CD14-positive monocyte (primary cell): ENCODE measurements at regions of chr10 and their contacts with region 1.

Region 1: DNA sequence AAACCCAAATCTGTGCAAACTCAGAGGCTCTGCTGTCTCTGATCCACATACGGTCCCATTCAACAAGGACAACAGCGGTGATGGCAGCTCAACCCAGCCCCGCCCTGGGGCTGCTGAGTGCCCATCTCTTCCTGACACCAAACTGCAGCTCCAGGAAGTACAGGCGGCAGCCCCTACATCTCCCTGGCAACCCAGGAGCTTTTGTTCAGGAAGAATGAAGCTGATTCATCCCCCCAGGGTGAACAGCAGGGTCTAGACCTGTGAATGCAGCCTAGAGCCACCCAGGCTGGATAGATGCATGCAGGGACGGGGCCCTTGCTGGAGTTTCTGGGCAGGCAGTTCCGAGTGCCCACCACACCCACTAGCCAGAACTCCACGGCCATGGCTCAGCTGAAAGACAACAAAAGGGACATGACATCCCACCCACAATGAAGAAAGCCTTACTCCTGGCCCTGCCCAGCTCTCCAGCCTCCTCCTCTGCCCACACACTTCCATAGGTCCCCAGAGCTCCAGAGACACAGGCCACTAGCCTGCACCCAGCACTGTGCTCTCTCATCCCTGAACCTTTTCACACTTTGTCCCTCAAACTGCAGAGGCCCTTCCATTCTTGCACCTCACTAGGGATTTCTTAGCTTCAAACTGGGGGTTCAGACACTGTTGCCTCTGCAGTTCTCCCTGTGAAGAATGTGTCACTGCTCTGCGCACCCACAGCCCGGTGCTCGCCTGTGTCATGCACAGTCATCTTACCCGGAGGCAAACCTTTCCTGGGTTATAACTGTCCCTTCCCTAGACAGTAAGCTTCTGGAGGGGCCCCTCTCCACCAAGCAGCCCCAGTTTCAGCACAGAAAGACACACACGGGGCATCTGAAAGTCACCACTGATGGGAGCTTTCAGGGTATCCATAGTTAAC is 99.1 kb downstream of the GRID1 start:
- DNase-seq: no peak
- H3K4me3 ChIP-seq: no peak overlapping the region
- H3K4me3 Mint-ChIP-seq: no peak overlapping the region
- H3K27ac ChIP-seq: no peak overlapping the region
- H3K27ac Mint-ChIP-seq: no peak overlapping the region
- H3K4me1 ChIP-seq: no peaks in the 10 kb centered on the region
- H3K4me1 Mint-ChIP-seq: peaks cover 2% of the 10 kb centered on the region
- H3K27me3 ChIP-seq: peaks cover 0 to 23% of the 10 kb centered on the region in 2 donors
- H3K27me3 Mint-ChIP-seq: peaks cover 27 to 30% (median 27%) of the 10 kb centered on the region in 3 donors
- CTCF ChIP-seq: no peak

Region 2: DNA sequence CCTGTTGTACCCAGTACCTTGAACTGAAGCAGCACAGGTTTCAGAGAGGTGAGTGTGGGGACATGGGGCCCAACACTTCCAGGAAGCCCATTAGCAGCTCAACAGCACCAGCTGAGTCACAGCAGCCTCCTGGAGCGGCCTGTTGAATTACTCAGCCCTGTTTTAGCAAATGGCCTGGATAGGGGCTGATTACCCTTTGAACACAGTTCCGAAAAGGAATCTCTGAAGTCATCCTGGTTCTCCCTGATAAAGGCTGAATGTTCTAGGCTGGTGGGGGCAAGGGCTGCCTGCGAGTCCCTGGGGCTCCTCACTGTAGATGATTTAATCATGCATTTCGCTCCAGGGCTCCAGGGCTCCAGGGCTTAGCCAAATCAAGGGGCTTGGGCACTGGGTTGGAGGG is 188.5 kb before region 1 on chr10:
- intact Hi-C with region 1: no loop called
- DNase-seq: no peak
- H3K4me3 ChIP-seq: no peak overlapping the region
- H3K4me3 Mint-ChIP-seq: no peak overlapping the region
- H3K27ac ChIP-seq: no peak overlapping the region
- H3K27ac Mint-ChIP-seq: no peak overlapping the region
- H3K4me1 ChIP-seq: no peaks in the 10 kb centered on the region
- H3K4me1 Mint-ChIP-seq: no peaks in the 10 kb centered on the region
- H3K27me3 ChIP-seq: no peaks in the 10 kb centered on the region
- H3K27me3 Mint-ChIP-seq: peaks cover 4 to 13% (median 5%) of the 10 kb centered on the region in 3 donors
- CTCF ChIP-seq: no peak

Region 3: GRCh38 chr10:86188326-86188725 is 79.2 kb before region 1 on chr10:
- intact Hi-C with region 1: loop called in 1 of 2 experiments (anchors 5 kb)
- DNase-seq: no peak
- H3K4me3 ChIP-seq: no peak overlapping the region
- H3K4me3 Mint-ChIP-seq: no peak overlapping the region
- H3K27ac ChIP-seq: no peak overlapping the region
- H3K27ac Mint-ChIP-seq: no peak overlapping the region
- H3K4me1 ChIP-seq: no peaks in the 10 kb centered on the region
- H3K4me1 Mint-ChIP-seq: no peaks in the 10 kb centered on the region
- H3K27me3 ChIP-seq: no peaks in the 10 kb centered on the region
- H3K27me3 Mint-ChIP-seq: peaks cover 0 to 7% (median 6%) of the 10 kb centered on the region in 3 donors
- CTCF ChIP-seq: no peak